ENCODE measurements at regions of chr3 and their contacts with region 1.

Region 1: GRCh38 chr3:52032702-52033408 is 23.5 kb downstream of the DUSP7 start:
- DNase-seq: no peak
- ATAC-seq: no peak
- H3K4me3 Mint-ChIP-seq: no peak overlapping the region
- H3K27ac Mint-ChIP-seq: no peak overlapping the region
- H3K4me1 Mint-ChIP-seq: peaks cover 7% of the 10 kb centered on the region; the same call in 1 of the 2 replicates
- H3K27me3 Mint-ChIP-seq: no peaks in the 10 kb centered on the region
- CTCF ChIP-seq: no peak

Region 2: GRCh38 chr3:52014613-52015012 is 18.2 kb before region 1 on chr3:
- CTCF ChIA-PET with region 1: interaction called, 16 read pairs
- POLR2A ChIA-PET with region 1: no interaction called
- DNase-seq: peak; percentile 66
- ATAC-seq: peak; percentile 92
- H3K4me3 Mint-ChIP-seq: no peak overlapping the region
- H3K27ac Mint-ChIP-seq: 0 out of 2 replicates have a peak overlapping the region, but pooled peaks have one; percentile 15
- H3K4me1 Mint-ChIP-seq: peaks cover 5% of the 10 kb centered on the region; the same call in 1 of the 2 replicates
- H3K27me3 Mint-ChIP-seq: no peaks in the 10 kb centered on the region; the same call in 1 of the 2 replicates
- CTCF ChIP-seq: no peak

Measured in WTC11 (cell line).